Calu3 (cell line): ENCODE measurements at regions of chr14 and their contacts with region 1.

Region 1: GRCh38 chr14:52220924-52221811 is 46.3 kb upstream of the PTGDR start:
- DNase-seq: no peak
- H3K4me3 Mint-ChIP-seq: peak overlapping the region; percentile 64
- H3K27ac Mint-ChIP-seq: no peak overlapping the region
- H3K4me1 Mint-ChIP-seq: no peaks in the 10 kb centered on the region
- H3K27me3 Mint-ChIP-seq: no peaks in the 10 kb centered on the region
- CTCF ChIP-seq: no peak

Region 2: GRCh38 chr14:51929166-51929565 is 292.0 kb before region 1 on chr14:
- CTCF ChIA-PET with region 1: no interaction called
- intact Hi-C with region 1: no loop called
- DNase-seq: no peak
- H3K4me3 Mint-ChIP-seq: no peak overlapping the region
- H3K27ac Mint-ChIP-seq: no peak overlapping the region
- H3K4me1 Mint-ChIP-seq: no peaks in the 10 kb centered on the region
- H3K27me3 Mint-ChIP-seq: peaks cover 40% of the 10 kb centered on the region
- CTCF ChIP-seq: no peak

Region 3: DNA sequence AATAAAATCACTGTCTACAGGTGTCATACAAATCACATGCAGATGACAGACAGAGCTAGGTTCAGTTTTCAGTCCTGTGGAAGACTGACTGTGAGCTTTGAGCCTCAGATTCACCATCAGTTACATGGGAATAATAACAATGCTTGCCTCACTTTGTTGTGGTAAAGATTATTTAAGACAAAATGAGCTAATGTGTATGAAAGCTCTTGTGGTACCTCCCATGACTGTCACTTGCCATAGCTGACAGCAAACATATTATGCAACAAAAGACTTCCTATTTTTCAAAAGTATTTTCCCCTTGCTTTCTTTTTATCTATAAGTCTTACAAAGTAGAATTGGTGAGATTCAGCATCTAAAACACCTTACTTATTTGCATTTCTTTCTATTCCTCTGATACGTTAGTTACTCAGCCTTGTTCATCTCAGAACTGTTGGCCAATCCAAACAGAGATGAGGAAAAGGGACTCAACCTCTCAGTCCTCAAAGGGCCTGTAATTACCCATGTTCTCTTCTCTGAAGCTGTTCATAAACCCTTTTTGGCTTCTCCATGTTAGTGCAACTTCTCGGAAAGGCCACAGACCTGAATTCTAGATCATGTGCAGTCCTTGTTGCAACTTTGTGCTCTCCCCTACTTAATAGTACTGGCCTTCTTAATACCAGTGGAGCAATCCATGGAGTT is 940.7 kb after region 1 on chr14:
- CTCF ChIA-PET with region 1: interaction called, 10 read pairs
- intact Hi-C with region 1: no loop called
- DNase-seq: no peak
- H3K4me3 Mint-ChIP-seq: no peak overlapping the region
- H3K27ac Mint-ChIP-seq: no peak overlapping the region
- H3K4me1 Mint-ChIP-seq: no peaks in the 10 kb centered on the region
- H3K27me3 Mint-ChIP-seq: no peaks in the 10 kb centered on the region
- CTCF ChIP-seq: no peak